ENCODE measurements at regions of chr5 and their contacts with region 1.

Region 1: DNA sequence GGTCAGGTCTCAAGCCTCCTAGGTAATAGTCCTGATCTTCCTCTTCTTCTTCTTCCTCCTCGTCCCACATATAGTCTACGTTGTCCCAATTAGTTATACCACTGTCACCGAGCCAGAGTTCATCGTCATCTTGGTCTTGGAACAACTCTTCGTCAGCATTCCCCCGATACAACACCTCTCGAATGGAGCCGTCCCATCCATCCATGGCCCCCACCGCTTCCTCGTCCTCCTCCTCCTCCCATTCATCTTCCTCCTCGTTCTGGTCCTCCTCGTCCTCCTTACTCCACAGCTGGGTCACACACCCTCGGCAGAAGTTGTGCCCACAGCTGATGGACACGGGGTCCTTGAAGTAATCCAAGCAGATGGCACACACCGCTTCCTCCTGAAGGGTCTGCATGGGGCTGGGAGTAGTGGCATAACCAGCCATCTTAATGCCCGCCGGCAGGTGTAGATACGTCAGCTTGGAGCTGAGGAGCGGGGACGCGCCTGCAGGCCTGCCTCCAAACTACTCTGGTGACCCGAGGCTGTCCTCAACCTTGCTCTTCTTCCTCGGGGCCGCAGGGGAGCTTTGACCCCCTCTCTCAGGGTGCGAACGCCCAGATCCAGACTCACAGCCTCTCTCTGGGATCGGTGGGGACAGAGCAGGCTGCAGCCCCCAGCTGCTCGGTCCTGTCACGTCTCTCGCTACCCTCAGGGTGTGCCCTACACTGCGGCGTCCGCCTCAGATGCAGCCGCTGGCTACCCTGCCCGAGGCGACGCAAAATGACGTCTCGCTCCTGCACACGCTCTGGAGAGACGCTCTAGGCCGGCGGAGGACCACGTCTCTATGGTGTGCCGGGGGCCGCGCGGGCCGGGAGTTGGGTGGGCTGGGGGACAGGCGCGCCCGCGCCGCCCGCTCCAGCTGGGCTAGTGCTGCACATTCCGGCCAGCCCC is at the start of gene TRIM52:
- DNase-seq: peak; percentile 92
- H3K4me3 Mint-ChIP-seq: peak within 1 kb of the TSS; percentile 94
- H3K27ac Mint-ChIP-seq: peak within 1 kb of the TSS; percentile 89
- H3K4me1 Mint-ChIP-seq: peaks cover 43% of the 10 kb centered on the region
- H3K27me3 Mint-ChIP-seq: no peaks in the 10 kb centered on the region
- total RNA-seq, gene TRIM52: 24.0 to 24.2 TPM

Region 2: DNA sequence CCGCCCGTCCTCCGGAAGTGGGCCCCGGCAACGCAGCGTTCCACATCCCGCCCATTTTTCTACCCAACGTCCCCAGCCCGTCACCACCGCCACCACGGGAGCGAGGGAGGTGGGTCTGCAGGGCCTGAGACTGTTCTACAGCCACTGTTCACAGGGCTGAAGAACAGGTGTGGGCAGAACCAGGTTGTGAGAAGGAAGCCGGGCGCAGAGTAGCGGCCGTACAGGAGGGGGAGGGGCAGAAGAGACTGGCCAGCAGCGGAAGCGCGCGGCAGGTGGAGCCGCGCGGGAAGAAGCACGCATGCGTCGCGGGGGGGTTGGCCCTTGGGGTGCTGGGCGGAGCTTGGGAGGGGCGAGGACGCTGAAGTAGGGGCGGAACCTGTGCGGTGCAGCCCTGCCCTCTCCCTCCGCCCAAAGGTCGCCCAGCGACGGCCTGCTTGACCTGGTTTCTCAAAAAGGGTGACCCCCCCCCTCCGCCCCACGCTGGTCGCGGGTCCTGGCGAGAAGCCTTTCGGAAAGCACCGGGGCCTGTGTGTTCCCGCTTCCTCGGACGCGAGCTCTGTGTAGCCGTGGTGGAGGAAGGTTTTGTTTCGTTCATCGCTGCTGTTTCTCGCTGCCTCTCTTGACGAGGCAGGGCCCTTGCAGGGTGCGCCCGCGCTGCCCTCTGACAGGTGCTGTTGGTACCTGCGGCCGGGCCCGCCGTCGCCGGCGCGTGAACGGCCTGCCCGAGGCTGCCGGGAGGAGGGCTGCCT is 450.3 kb before region 1 on chr5:
- CTCF ChIA-PET with region 1: no interaction called
- POLR2A ChIA-PET with region 1: interaction called, 15 read pairs
- DNase-seq: peak; percentile 95
- H3K4me3 Mint-ChIP-seq: peak overlapping the region; percentile 92
- H3K27ac Mint-ChIP-seq: peak overlapping the region; percentile 99
- H3K4me1 Mint-ChIP-seq: peaks cover 72% of the 10 kb centered on the region
- H3K27me3 Mint-ChIP-seq: no peaks in the 10 kb centered on the region

Region 3: DNA sequence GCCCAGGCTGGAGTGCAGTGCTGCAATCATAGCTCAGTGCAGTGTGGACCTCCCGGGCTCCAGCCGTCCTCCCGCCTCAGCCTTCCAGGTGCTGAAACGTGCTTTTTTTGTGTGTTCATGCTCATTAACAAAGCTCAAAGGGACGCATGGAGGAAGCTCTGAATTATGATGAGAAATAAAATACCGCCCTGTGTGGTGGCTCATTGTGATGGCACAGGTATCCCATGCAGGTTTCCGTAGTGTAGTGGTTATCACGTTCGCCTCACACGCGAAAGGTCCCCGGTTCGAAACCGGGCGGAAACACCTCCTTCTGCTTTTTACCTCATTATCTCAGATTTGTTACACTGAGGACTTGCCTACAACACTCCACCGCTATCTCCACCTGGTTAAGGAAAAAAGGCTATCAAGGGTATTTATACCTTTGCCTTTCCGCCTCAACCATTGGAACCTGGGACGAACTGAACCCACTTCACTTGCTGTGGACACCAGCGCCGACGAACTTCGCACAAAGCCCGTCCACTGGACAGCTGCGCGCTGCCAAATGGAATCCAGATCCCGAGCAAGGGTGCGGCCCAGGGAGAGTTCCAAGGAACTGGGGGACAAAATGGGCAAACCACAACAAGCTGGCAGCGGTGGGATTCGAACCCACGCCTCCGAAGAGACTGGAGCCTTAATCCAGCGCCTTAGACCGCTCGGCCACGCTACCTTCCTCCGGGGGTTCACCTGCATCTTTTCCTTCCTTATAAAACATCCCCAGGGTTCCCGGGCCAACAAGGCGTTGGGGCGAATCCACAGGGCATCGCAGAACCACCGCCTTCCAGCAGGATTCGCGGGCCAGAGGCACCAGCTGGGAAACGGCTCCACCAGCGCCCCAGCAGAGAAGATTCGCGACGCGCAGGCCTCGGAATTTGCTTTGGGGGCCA is 87.0 kb before region 1 on chr5:
- CTCF ChIA-PET with region 1: no interaction called
- POLR2A ChIA-PET with region 1: interaction called, 12 read pairs
- DNase-seq: peak; percentile 72
- H3K4me3 Mint-ChIP-seq: peak overlapping the region; percentile 78
- H3K27ac Mint-ChIP-seq: peak overlapping the region; percentile 80
- H3K4me1 Mint-ChIP-seq: peaks cover 46% of the 10 kb centered on the region
- H3K27me3 Mint-ChIP-seq: peaks cover 54% of the 10 kb centered on the region

Region 4: GRCh38 chr5:181207214-181208107 is 53.2 kb before region 1 on chr5:
- CTCF ChIA-PET with region 1: interaction called, 4 read pairs
- POLR2A ChIA-PET with region 1: interaction called, 50 read pairs
- DNase-seq: peak; percentile 80
- H3K4me3 Mint-ChIP-seq: peak overlapping the region; percentile 81
- H3K27ac Mint-ChIP-seq: peak overlapping the region; percentile 85
- H3K4me1 Mint-ChIP-seq: peaks cover 37% of the 10 kb centered on the region
- H3K27me3 Mint-ChIP-seq: peaks cover 32% of the 10 kb centered on the region

Region 5: DNA sequence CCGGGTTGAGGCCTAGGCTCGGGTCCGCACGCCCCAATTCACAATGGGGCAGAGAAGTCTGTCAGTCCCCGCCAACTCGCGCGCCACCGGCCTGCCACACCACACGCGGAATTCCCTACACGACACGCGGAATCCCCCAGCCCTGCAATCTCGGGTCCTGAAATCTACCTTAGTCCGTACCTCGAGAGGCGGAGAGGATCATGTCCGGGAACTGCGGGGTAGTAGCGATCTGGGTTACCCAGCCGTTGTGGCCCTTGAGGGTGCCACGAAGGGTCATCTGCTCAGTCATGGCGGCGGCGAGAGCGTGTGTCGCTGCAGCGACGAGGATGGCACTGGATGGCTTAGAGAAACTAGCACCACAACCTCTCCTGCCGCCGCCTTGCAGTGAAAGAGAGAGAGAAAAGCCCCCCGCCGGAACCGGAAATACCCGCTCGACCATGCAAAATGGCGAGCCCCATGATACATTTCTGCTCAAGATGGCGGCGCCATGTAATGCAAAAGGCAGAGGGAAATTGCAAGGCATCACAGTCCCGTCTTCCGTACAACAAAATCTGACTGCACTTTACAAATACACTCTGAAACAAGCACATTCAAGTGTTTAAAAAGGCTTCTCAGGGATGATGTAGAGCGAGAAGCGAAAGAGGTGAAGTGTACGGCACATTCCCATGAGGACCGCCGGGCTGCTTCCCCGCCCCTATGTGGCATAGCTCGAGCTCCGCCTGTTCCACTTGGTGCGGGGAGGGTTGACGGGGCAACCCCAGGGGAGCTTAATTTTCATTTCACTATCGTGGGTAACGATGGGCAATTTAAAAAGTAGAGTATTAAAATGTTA is 16.9 kb before region 1 on chr5 and contains the start of gene RACK1:
- CTCF ChIA-PET with region 1: interaction called, 21 read pairs
- POLR2A ChIA-PET with region 1: interaction called, 1,091 read pairs
- DNase-seq: peak; percentile 91
- H3K4me3 Mint-ChIP-seq: peak within 1 kb of the TSS; percentile 97
- H3K27ac Mint-ChIP-seq: peak within 1 kb of the TSS; percentile 92
- H3K4me1 Mint-ChIP-seq: peaks cover 67% of the 10 kb centered on the region
- H3K27me3 Mint-ChIP-seq: no peaks in the 10 kb centered on the region
- total RNA-seq, gene RACK1: 1,749 to 1,772 TPM